Activated T-helper 2 cell treated with anti-CD3 and anti-CD28 coated beads, Interferon-gamma antibody, Interleukin-2, Interleukin-4, amounts not matched to agents 10 μg/mL and 5 μg/mL and 100 μg/mL, durations not matched to agents 14 hours and 24 hours and 36 hours (primary cell): ENCODE measurements at regions of chr14 and their contacts with region 1.

Region 1: DNA sequence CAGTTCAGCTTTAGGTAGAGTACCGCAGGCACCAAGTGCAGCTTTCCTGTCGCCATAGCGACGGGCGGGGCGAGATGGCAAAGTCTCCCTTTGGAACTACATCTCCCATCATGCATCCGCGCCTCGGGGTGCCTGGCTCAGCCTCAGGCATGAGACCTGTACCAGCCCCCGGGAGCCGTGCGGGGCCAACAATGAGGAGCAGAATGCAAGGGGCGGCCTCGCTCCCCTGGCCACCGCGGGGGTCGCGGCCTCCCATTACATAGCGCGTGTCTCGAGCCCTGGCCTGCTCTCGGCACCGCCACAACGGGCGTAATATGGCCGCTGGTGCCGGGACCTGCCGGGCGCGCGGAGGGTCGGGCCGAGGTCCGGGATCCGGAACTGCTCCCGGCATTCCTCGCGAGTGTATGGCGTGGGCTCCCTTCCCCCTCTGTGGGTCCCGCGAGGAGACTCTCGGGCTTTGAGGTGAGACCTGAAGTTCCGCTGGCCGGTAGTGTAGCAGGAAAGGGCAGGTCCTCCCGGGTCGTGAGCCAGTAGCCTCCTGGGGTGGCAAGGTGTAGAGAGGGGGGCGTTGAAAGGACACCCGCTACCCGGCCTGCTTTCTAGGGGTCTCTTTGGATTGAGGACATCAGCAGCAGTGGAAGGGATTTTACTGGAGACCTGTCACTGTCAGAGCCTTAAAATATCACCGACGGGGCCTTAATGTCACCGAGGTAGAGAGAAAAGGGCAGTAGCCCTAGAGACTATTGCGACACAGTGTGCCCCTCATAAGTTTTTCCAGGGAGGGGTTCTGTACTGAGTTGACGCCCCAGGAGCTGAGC is at the start of gene THTPA:
- DNase-seq: peak; percentile 87
- H3K4me3 Mint-ChIP-seq: peak within 1 kb of the TSS; percentile 96
- H3K27ac Mint-ChIP-seq: peak within 1 kb of the TSS; percentile 97
- H3K4me1 Mint-ChIP-seq: peaks cover 31% of the 10 kb centered on the region
- H3K27me3 Mint-ChIP-seq: no peaks in the 10 kb centered on the region
- total RNA-seq, gene THTPA: 12.8 and 13.7 TPM in 2 replicates

Region 2: DNA sequence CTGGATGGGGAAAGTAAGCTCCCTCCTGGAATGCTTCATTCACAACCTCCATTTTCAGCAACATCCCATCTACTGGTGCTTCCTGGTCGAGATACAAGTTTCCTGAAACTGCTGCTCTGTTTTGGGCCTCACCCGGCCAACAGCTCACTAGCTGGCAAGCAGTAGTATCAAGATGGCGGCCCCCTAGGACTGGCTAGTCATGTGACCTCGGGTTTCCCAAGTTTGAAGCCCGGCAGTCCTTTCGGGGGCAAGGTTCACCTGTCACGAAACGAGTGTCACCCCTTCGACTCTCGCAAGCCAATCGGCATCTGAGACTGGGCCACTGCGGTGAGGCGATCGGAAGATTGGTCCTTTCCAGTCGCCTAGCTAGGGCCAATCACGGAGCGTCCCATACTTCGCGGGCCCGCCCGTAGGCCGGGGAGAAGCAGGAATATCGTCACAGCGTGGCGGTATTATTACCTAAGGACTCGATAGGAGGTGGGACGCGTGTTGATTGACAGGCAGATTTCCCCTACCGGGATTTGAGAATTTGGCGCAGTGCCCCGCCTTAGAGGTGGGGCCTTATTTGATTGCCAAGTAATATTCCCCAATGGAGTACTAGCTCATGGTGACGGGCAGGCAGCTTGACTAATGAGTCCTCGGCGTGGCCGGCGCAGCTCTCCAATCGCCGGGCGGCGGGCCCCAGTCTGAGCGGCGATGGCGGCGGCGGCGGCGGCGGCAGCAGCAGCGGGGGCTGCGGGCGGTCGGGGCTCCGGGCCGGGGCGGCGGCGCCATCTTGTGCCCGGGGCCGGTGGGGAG is 235.1 kb before region 1 on chr14 and contains the start of gene PABPN1:
- intact Hi-C with region 1: loop called (anchors 5 kb)
- DNase-seq: peak; percentile 98
- H3K4me3 Mint-ChIP-seq: peak within 1 kb of the TSS; percentile 88
- H3K27ac Mint-ChIP-seq: peak within 1 kb of the TSS; percentile 86
- H3K4me1 Mint-ChIP-seq: peaks cover 23% of the 10 kb centered on the region
- H3K27me3 Mint-ChIP-seq: no peaks in the 10 kb centered on the region
- total RNA-seq, gene PABPN1: 241 and 259 TPM in 2 replicates

Region 3: DNA sequence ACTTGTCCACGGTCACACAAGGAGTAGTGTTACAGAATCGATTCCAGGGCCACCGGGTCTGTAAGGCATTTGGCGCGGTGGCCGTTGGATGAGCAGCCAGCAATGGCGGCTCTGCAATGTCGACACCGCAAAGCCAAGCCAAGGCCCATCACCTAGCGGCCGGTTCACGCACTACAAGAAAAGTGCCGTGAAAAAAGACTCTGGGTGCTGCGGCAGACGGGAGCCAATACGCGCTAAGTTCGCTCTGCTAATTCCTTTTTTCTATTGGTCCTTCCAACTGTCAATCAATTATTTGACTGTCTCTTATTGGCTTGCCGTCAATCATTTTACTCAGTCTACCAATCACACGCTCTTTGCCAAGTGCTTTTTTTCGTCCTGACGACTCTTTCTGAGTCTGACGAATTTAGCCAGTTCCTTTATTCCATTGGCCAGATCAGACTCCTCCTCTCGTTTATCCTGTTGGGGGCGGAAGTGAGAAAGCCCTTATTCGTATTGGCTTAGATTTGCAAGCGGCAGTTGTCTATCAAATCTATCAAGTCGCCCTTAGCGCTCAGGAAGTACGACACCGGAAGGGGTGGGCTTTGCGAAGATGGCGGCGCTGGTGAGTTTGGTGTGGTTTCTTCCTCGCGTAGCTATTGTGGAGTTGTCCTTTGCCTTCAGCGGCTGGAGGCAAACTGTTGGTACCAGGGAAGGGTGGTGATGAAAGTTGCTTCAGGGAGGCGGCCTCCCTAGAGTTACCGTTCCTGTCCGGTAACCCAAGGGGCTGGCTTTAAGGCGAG is 86.8 kb before region 1 on chr14 and contains the start of gene NGDN:
- intact Hi-C with region 1: loop called (anchors 1 kb)
- DNase-seq: peak; percentile 91
- H3K4me3 Mint-ChIP-seq: no peak within 1 kb of the TSS
- H3K27ac Mint-ChIP-seq: peak within 1 kb of the TSS; percentile 52
- H3K4me1 Mint-ChIP-seq: peaks cover 10% of the 10 kb centered on the region
- H3K27me3 Mint-ChIP-seq: no peaks in the 10 kb centered on the region
- total RNA-seq, gene NGDN: 65.6 and 65.7 TPM in 2 replicates

Region 4: DNA sequence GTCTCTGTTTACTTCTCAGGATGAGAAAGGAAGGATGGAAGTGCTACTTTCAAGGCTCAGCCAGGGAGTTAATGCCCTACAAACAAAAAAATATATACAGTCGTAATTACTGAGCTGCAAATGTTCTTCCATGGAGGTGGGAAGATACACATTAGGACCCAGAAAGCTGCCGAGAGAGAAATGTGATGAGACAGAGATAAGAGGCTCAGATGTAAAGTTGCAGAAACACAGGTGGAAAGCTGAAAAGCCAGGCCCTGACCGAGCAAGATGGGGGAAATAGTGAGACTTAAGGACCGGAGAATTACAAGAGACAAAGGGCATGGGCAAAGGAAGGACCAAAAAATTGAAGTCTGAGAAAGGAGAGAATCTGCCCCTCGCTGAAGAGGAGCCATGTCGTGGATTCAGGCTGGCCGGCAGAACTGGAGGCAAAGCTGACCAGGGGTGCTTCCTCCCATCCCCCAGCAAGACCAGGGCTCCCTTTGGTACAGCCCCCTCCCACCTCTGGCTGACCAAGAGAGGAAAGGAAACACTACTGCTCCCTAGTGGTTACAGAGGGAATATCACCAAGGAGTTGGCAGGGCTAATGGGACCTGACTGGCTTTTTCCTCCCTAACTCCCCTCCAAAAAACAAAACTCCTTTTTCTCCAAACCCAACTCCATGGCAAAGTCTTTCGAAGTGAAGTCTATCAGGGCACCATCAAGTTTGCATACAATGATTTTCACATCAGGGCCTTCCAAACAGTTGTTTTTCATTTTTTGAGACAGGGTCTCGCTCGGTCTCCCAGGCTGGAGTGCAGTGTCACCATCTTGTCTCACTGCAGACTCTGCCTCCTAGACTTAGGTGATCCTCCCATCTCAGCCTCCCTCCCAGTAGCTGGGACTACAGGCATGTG is 16.6 kb before region 1 on chr14:
- intact Hi-C with region 1: loop called (anchors 1 kb)
- DNase-seq: no peak
- H3K4me3 Mint-ChIP-seq: no peak overlapping the region
- H3K27ac Mint-ChIP-seq: no peak overlapping the region
- H3K4me1 Mint-ChIP-seq: no peaks in the 10 kb centered on the region
- H3K27me3 Mint-ChIP-seq: no peaks in the 10 kb centered on the region

Region 5: DNA sequence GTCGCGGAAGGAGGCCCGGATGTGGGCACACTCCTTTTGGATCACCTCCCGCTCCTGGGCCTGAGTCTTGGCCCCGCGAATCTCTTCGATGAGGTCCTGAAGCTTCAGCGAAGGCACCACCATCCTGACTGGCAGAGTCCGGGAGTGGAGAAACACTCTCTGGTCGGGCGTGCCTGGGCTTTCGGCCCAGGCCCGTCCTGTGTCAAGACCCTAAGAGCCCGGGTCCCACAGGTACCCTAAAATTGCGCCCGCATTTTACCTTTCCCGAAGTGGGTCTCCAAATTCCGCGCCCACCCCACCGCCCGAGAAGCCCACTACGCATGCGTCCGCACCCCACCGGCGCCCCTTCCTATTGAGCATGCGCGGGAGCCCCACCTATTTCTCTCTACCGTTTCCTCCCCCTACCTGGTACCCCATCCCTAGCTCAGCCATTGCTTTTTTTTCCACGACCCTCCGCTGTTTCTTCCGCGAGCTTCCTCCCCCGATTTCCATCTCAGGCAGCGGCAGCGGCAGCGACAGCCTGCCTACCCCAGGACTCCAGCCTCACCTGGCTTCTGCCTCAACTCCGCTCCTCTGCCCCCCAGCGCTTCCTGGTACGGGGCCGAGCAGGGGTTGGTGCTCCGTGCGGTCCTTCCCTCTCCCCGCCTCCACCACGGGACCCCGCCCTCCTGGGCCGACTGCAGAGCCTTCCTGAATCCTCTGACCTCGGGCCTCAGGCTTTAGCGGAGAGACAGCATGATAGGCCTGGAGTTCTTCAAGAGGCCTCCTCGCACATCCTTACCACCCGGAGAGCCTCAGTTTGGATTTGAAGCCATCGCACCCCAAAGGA is 11.3 kb after region 1 on chr14 and contains the start of gene AP1G2:
- intact Hi-C with region 1: loop called (anchors 1 kb)
- DNase-seq: peak; percentile 86
- H3K4me3 Mint-ChIP-seq: peak within 1 kb of the TSS; percentile 99
- H3K27ac Mint-ChIP-seq: peak within 1 kb of the TSS; percentile 95
- H3K4me1 Mint-ChIP-seq: peaks cover 15% of the 10 kb centered on the region
- H3K27me3 Mint-ChIP-seq: peaks cover 4% of the 10 kb centered on the region
- total RNA-seq, gene AP1G2: 164 and 170 TPM in 2 replicates

Region 6: DNA sequence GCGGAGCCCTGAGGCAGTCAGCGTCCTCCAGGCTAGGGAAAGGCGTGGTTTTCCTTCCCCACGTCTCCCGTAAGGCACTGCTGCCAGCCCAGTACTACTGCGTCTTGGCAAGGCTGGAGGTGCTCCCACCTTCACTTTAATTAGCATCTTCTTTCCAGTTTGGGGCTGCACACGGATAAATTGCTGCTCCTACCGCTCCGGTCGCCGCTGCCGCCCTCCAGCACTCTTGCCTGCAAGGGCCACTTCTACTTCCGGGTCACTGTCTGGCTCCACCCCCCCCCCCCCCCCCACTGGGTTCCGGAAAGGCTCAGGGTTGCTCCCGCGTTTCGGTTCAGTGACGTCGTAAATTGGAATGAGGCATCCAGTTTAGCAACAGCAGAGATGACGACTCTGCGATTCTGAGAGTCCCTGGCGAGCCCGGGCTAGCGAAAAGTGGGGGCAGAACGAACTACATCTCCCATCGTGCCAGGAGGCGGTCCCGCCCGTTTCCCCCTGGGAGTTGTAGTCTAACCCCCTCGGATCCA is 676.1 kb after region 1 on chr14 and contains the start of gene NEDD8:
- intact Hi-C with region 1: loop called (anchors 2 kb)
- DNase-seq: peak; percentile 89
- H3K4me3 Mint-ChIP-seq: peak within 1 kb of the TSS; percentile 97
- H3K27ac Mint-ChIP-seq: peak within 1 kb of the TSS; percentile 91
- H3K4me1 Mint-ChIP-seq: peaks cover 44% of the 10 kb centered on the region
- H3K27me3 Mint-ChIP-seq: no peaks in the 10 kb centered on the region
- total RNA-seq, gene NEDD8: 194 and 202 TPM in 2 replicates